ENCODE measurements at regions of chr19 and their contacts with region 1.

Region 1: DNA sequence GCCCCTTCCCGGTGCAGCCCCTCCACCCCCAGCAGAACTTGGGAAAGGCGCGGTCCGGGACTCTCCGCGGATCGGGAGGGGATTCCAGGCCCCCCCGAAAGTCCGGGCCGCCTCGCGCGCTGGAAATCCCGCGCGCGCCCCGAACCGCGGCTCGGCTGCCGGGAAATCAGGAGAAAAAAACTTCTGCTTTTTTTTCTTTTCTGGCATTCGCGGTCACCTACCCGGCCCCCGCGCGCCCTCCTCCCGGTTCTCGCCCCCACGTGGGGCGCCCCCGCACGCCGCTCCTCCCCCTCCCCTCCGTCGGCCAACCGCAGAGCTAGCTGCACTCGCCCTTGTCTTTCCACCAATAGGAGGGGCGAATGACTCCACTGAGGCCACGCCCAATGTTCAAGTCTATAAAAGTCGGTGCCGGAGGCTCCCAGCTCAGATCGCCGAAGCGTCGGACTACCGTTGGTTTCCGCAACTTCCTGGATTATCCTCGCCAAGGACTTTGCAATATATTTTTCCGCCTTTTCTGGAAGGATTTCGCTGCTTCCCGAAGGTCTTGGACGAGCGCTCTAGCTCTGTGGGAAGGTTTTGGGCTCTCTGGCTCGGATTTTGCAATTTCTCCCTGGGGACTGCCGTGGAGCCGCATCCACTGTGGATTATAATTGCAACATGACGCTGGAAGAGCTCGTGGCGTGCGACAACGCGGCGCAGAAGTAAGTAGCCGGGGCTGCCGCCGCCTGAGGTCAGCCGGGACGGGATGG is at the start of gene GADD45B:
- DNase-seq: peak; percentile 95
- H3K4me3 Mint-ChIP-seq: peak within 1 kb of the TSS; percentile 95
- H3K27ac Mint-ChIP-seq: peak within 1 kb of the TSS; percentile 93
- H3K4me1 Mint-ChIP-seq: peaks cover 9% of the 10 kb centered on the region
- H3K27me3 Mint-ChIP-seq: peaks cover 11% of the 10 kb centered on the region
- CTCF ChIP-seq: no peak
- total RNA-seq, gene GADD45B: 26.3 and 36.5 TPM in 2 replicates

Region 2: DNA sequence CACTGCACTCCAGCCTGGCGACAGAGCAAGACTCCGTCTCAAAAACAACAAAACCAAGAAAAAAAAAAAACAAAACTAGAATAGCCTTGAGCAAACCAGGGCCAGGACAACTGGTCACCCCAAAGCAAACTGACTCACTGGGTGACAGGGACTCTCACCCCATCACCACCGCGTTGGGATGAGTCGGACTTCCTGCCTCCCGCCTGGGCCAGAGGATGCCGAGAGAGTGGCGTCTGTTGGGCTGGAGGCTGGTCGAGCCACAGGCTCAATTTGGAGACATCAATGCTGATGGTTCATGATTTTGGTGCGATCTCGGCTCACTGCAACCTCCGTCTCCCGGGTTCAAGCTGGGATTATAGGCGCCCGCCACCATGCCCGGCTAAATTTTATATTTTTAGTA is 104.2 kb before region 1 on chr19:
- CTCF ChIA-PET with region 1: no interaction called
- intact Hi-C with region 1: no loop called
- DNase-seq: no peak
- H3K4me3 Mint-ChIP-seq: no peak overlapping the region
- H3K27ac Mint-ChIP-seq: no peak overlapping the region
- H3K4me1 Mint-ChIP-seq: no peaks in the 10 kb centered on the region
- H3K27me3 Mint-ChIP-seq: peaks cover 13% of the 10 kb centered on the region
- CTCF ChIP-seq: no peak

Region 3: DNA sequence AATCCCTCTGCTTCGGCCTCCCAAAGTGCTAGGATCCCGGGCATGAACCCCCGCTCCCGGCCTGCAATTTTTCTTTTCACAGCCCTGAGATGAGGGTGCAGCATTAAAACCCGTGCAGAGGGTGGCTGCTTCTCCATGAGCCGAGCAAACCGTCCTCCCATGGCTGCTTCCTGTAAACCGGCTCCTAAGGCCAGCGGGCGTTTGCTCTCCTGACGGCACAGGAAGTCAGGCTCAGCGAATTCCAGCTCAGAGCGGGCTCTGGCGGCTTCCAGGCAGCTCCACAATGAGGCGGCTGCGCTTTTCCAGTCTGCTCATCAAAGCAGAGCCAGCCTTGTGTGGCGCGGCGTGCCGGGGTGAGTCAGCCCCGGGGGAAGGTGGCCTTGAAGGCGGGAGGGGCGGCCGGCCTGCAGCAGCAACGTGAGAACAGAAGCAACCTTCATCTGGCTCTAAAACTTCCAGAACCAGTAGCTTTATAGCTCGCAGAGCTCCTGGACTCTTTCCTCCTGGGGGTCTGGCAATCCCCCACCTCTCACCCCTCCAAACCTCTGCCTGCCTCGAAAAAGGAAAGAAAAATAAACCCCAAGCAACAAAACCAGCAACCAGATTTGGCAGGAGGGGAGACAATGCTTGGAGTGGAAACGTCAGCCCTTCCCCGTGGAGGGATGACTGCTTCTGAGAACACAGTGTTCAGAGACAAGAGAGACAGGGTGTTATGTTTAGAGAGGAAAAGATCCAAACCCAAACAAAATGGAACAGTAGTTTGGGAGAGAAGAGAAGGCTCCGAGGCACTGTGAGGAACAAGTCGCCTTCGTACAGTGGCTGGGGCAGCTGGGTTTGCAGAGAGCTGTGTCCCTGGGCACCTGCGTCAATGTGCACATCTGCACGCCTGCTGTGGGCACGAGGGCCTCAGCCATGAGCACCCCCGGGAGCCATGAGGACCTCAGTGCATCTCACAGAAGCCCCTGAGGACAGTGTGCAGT is 67.9 kb after region 1 on chr19:
- CTCF ChIA-PET with region 1: interaction called, 12 read pairs
- intact Hi-C with region 1: loop called (anchors 5 kb)
- DNase-seq: peak; percentile 88
- H3K4me3 Mint-ChIP-seq: peak overlapping the region; percentile 16
- H3K27ac Mint-ChIP-seq: peak overlapping the region; percentile 80
- H3K4me1 Mint-ChIP-seq: peaks cover 37% of the 10 kb centered on the region
- H3K27me3 Mint-ChIP-seq: no peaks in the 10 kb centered on the region
- CTCF ChIP-seq: no peak

Region 4: GRCh38 chr19:2610637-2611482 is 135.0 kb after region 1 on chr19:
- CTCF ChIA-PET with region 1: interaction called, 13 read pairs
- intact Hi-C with region 1: no loop called
- DNase-seq: peak; percentile 93
- H3K4me3 Mint-ChIP-seq: peak overlapping the region; percentile 62
- H3K27ac Mint-ChIP-seq: no peak overlapping the region
- H3K4me1 Mint-ChIP-seq: no peaks in the 10 kb centered on the region
- H3K27me3 Mint-ChIP-seq: no peaks in the 10 kb centered on the region
- CTCF ChIP-seq: peak; percentile 83